ENCODE measurements at regions of chr22 and their contacts with region 1.

Region 1: DNA sequence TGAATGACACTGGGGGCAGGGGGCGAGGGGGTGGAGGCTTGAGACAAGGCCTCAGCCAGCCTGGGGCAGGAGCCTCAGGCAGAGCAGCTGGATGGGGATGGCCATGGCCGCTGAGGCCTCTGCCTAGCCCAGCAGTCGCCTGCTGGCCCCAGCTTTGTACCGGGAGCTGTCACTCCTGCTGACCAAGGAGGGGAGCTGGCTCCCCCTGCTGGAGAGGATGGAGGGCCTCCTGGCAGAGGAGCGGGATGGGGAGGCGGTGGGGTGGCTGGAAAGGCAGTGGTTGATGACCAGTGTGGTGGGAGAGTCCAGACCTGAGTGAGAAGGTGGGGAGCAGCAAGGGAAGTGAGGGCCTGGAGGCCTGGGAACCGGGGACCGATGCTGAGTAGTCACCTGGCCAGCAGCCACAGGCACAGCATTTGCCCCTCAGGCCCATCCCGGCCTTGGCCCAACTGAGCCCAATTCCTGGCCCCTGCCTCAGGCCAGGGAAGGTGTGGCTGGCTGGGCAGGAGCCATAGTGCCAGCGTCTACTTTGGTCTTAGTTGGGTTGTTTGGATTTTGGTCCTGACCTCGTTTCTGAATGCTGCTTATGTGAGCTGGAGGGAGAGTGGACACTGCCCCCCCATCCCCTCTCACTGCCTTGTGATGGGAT is 6.0 kb upstream of the SUSD2 start:
- DNase-seq: peak; percentile 69
- ATAC-seq: peak; percentile 73
- H3K4me3 ChIP-seq: no peak overlapping the region
- H3K4me3 Mint-ChIP-seq: no peak overlapping the region
- H3K27ac ChIP-seq: no peak overlapping the region
- H3K27ac Mint-ChIP-seq: peak overlapping the region; percentile 67
- H3K4me1 ChIP-seq: no peaks in the 10 kb centered on the region
- H3K4me1 Mint-ChIP-seq: no peaks in the 10 kb centered on the region
- H3K27me3 ChIP-seq: no peaks in the 10 kb centered on the region
- H3K27me3 Mint-ChIP-seq: no peaks in the 10 kb centered on the region
- CTCF ChIP-seq: peak; percentile 71

Region 2: GRCh38 chr22:23984430-23984829 is 190.9 kb before region 1 on chr22:
- CTCF ChIA-PET with region 1: interaction called, 3 read pairs
- POLR2A ChIA-PET with region 1: no interaction called
- intact Hi-C with region 1: loop called (anchors 5 kb)
- DNase-seq: no peak
- ATAC-seq: peak; percentile 78
- H3K4me3 ChIP-seq: no peak overlapping the region
- H3K4me3 Mint-ChIP-seq: no peak overlapping the region
- H3K27ac ChIP-seq: no peak overlapping the region
- H3K27ac Mint-ChIP-seq: no peak overlapping the region
- H3K4me1 ChIP-seq: no peaks in the 10 kb centered on the region
- H3K4me1 Mint-ChIP-seq: no peaks in the 10 kb centered on the region
- H3K27me3 ChIP-seq: peaks cover 0 to 8% (median 0%) of the 10 kb centered on the region in 4 experiments
- H3K27me3 Mint-ChIP-seq: no peaks in the 10 kb centered on the region
- CTCF ChIP-seq: peak; percentile 56

Region 3: DNA sequence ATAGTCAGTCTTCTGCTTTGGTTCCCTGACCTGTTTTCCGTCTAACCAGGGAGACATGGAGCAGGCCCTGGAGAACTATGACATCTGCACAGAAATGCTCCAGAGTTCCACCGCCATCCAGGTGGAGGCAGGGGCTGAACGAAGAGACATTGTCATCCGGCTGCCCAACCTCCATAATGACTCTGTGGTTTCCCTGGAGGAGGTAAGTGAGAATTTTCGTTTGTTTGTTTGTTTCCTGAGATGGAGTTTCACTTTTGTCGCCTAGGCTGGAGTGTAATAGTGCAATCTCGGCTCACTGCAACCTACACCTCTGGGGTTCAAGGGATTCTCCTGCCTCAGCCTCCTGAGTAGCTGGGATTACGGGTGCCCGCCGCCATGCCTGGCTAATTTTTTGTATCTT is 111.3 kb before region 1 on chr22:
- CTCF ChIA-PET with region 1: interaction called, 10 read pairs
- POLR2A ChIA-PET with region 1: no interaction called
- intact Hi-C with region 1: no loop called
- DNase-seq: no peak
- ATAC-seq: no peak
- H3K4me3 ChIP-seq: no peak overlapping the region
- H3K4me3 Mint-ChIP-seq: no peak overlapping the region
- H3K27ac ChIP-seq: no peak overlapping the region
- H3K27ac Mint-ChIP-seq: no peak overlapping the region
- H3K4me1 ChIP-seq: peaks cover 27 to 29% of the 10 kb centered on the region in 2 donors
- H3K4me1 Mint-ChIP-seq: peaks cover 37% of the 10 kb centered on the region
- H3K27me3 ChIP-seq: no peaks in the 10 kb centered on the region
- H3K27me3 Mint-ChIP-seq: no peaks in the 10 kb centered on the region
- CTCF ChIP-seq: no peak

Region 4: DNA sequence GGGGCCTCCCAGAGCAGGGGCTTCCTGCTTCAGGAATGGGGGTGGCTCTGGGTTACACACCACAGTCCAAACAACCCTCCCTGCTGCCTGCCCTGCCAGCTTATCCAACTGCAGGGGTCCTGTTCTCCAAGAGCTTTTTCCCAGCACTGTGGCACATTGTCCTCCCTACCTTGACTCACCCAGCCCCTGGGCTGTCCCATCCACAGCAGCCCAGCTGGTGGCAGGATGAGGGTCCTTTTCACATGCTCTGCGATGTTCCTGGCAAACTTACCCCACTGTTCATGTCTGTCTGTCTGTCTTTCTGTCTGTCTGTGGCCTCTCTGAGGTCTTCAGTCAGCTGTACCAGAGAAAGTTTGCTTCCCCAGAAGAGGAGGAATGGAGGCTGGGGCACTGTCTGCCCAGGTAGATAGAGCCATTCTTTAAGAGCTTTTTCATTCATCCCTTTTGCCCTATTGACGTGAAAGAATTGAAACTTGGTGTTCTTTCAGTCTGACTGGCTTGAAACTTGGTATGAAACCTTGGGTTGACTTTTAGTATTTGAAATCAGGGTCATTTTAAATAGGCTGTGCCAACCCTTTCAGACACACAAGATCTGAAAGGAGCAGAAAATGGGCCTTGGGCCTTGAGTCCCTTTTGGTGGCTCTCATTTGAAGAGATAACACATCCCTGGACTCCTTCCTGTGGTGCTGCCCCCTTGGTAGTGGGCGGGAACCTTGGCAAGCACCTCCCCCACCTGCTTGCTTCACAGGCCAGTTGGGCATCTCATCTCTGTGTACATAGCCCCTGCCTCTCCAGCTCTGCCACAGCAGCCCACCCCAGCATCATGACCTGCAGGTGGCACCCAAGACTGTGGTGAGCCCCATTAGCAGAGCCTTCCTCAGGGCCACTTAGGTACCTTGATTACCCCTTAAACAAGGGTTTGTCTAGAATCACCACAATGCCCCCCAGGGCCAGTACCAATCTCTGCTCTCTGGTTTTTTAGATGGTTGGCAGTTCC is 68.6 kb before region 1 on chr22:
- CTCF ChIA-PET with region 1: interaction called, 84 read pairs
- POLR2A ChIA-PET with region 1: no interaction called
- intact Hi-C with region 1: no loop called
- DNase-seq: peak; percentile 66
- ATAC-seq: peak; percentile 69
- H3K4me3 ChIP-seq: no peak overlapping the region
- H3K4me3 Mint-ChIP-seq: no peak overlapping the region
- H3K27ac ChIP-seq: no peak overlapping the region
- H3K27ac Mint-ChIP-seq: peak overlapping the region; percentile 37
- H3K4me1 ChIP-seq: no peaks in the 10 kb centered on the region
- H3K4me1 Mint-ChIP-seq: no peaks in the 10 kb centered on the region
- H3K27me3 ChIP-seq: no peaks in the 10 kb centered on the region
- H3K27me3 Mint-ChIP-seq: no peaks in the 10 kb centered on the region
- CTCF ChIP-seq: peak; percentile 63

Region 5: GRCh38 chr22:24133187-24133965 is 41.9 kb before region 1 on chr22:
- CTCF ChIA-PET with region 1: interaction called, 48 read pairs
- POLR2A ChIA-PET with region 1: interaction called, 4 read pairs
- intact Hi-C with region 1: no loop called
- DNase-seq: peak; percentile 43
- ATAC-seq: no peak
- H3K4me3 ChIP-seq: no peak overlapping the region
- H3K4me3 Mint-ChIP-seq: no peak overlapping the region
- H3K27ac ChIP-seq: peak overlapping the region in 1 of 2 donors; percentile 19
- H3K27ac Mint-ChIP-seq: peak overlapping the region; percentile 32
- H3K4me1 ChIP-seq: peaks cover 7 to 26% of the 10 kb centered on the region in 2 donors
- H3K4me1 Mint-ChIP-seq: peaks cover 24% of the 10 kb centered on the region
- H3K27me3 ChIP-seq: no peaks in the 10 kb centered on the region
- H3K27me3 Mint-ChIP-seq: no peaks in the 10 kb centered on the region
- CTCF ChIP-seq: peak; percentile 12